ENCODE measurements at regions of chr18 and their contacts with region 1.

Region 1: GRCh38 chr18:23401400-23402347 is 51.4 kb upstream of the RIOK3 start:
- DNase-seq: no peak
- H3K4me3 ChIP-seq: no peak overlapping the region
- H3K27ac ChIP-seq: no peak overlapping the region
- H3K4me1 ChIP-seq: no peaks in the 10 kb centered on the region
- H3K27me3 ChIP-seq: no peaks in the 10 kb centered on the region
- CTCF ChIP-seq: no peak

Region 2: DNA sequence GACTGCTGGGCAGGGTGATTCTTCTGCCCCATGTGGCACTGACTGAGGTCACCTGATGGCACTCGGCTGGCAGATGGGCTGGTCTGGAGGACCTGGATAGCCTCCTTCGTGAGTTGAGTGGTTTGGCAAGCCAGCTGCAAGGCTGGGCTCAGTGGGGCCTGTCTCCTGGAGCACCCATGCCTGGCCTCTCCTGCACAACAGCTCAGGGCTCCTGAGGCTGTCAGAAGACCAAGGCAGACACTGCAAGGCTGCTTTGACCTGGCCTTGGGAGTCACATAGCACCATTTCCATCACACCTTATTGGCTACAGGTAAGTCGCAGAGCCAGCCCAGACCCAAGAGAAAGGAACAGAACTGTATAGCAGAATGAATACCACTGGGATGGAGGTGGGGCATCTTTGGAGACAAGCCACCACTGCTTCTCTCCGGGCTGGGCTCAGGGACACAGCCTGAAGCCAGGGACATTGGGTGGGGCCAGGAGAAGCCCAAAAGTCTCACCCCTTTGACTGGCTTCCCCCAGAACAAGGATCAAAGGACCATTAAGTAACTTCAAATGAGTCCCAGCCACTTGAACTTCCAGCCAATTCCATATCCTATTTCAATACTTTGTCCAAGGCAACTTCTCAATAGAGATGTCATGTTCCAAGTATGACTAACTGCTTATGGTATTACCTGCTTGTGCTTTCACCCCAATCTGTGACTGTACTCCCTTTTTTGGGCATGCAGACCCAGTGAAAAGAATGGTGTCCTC is 110.0 kb before region 1 on chr18:
- CTCF ChIA-PET with region 1: no interaction called
- POLR2A ChIA-PET with region 1: interaction called, 12 read pairs
- intact Hi-C with region 1: no loop called
- DNase-seq: no peak
- H3K4me3 ChIP-seq: no peak overlapping the region
- H3K27ac ChIP-seq: no peak overlapping the region
- H3K4me1 ChIP-seq: no peaks in the 10 kb centered on the region
- H3K27me3 ChIP-seq: no peaks in the 10 kb centered on the region
- CTCF ChIP-seq: no peak

Region 3: DNA sequence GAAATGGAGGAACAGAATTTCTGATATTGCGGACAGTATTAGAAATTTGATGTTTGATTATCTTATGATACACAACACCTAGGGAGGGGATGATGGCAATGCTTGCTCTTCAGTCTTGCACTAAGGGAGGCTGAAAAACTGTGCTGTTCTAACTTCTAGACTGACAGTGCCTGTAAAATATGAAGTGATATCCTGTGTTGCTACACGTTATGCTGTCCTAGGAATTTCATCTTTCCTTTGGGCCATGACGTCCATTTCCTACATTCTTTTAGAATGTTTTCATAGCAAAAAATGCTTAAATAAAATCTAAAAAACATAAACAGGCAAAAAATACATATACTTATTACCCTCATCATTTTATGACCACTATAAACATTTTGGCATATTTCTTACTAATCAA is 940.7 kb after region 1 on chr18:
- CTCF ChIA-PET with region 1: no interaction called
- POLR2A ChIA-PET with region 1: no interaction called
- intact Hi-C with region 1: no loop called
- DNase-seq: no peak
- H3K4me3 ChIP-seq: no peak overlapping the region
- H3K27ac ChIP-seq: no peak overlapping the region
- H3K4me1 ChIP-seq: peaks cover 6% of the 10 kb centered on the region
- H3K27me3 ChIP-seq: no peaks in the 10 kb centered on the region
- CTCF ChIP-seq: no peak